H1 (cell line): ENCODE measurements at regions of chr2 and their contacts with region 1.

Region 1: DNA sequence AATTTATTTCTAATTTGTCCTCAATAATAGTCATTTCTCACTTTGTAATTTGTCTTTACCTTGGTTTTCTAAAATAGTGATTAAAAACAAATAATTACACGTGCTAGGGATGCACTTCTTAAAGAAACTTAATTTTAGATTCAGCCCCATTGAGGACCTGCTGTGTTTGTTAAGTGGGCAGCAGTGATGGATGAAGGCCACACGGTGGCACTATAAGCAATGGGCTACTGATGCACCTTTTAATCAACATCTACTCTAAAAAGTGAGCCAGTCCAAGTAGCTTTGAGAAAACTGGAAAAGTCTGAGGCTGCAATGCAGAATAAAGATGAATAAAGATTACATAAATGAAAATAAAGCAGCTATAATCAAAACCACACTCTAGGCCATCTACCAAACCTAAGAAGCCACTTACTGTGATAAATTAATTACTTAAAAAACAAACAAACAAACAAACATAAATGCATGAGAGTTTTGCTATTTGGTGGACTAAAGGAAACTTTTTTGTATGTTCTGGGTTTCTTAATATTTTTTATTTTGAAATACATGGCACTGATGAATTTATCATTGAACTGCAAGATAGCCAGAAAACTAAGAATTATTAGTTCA is 89.3 kb downstream of the PDE11A start:
- DNase-seq: peak in 1 of 2 experiments; percentile 15
- H3K4me3 ChIP-seq: no peak overlapping the region
- H3K27ac ChIP-seq: no peak overlapping the region
- H3K4me1 ChIP-seq: no peaks in the 10 kb centered on the region
- H3K27me3 ChIP-seq: no peaks in the 10 kb centered on the region
- CTCF ChIP-seq: peak; percentile 52 to 84 (median 78)
- EP300 ChIP-seq: no peak
- POLR2A ChIP-seq: no peak
- RAD21 ChIP-seq: peak; percentile 82 to 84

Region 2: GRCh38 chr2:178008636-178009289 is 25.5 kb after region 1 on chr2:
- CTCF ChIA-PET with region 1: interaction called, 10 read pairs
- POLR2A ChIA-PET with region 1: no interaction called
- DNase-seq: no peak
- H3K4me3 ChIP-seq: no peak overlapping the region
- H3K27ac ChIP-seq: no peak overlapping the region
- H3K4me1 ChIP-seq: no peaks in the 10 kb centered on the region
- H3K27me3 ChIP-seq: no peaks in the 10 kb centered on the region
- CTCF ChIP-seq: no peak
- EP300 ChIP-seq: no peak
- POLR2A ChIP-seq: no peak
- RAD21 ChIP-seq: no peak

Region 3: DNA sequence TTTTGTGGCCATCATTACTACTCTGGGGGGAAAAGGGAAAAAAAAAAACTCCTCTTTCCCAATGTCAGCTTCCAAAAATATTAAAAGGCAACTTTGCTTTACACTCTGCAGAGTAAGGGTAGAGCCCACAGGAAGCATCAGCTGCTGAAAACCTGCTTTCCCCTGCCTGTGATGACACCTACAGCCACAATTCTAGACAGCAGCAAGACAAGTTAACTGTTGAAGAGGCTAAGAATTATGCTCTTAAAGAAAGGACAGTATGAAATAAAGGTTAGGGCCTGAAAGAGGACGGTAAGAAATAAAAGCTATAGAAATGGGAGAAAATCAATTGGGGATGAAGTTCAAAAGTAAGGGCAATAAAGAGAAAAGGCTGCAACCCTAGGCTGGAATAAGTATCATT is 86.3 kb after region 1 on chr2:
- CTCF ChIA-PET with region 1: interaction called, 16 read pairs
- POLR2A ChIA-PET with region 1: no interaction called
- DNase-seq: no peak
- H3K4me3 ChIP-seq: no peak overlapping the region
- H3K27ac ChIP-seq: no peak overlapping the region
- H3K4me1 ChIP-seq: peaks cover 0 to 7% (median 1%) of the 10 kb centered on the region in 4 experiments; a peak in 2 of 7 replicates
- H3K27me3 ChIP-seq: peaks cover 0 to 13% (median 11%) of the 10 kb centered on the region in 4 experiments; a peak in 4 of 7 replicates
- CTCF ChIP-seq: peak in 1 of 3 experiments; percentile 18; a peak in 1 of 4 replicates
- EP300 ChIP-seq: no peak
- POLR2A ChIP-seq: no peak
- RAD21 ChIP-seq: peak; percentile 44 to 62